ENCODE measurements at regions of chr5 and their contacts with region 1.

Region 1: DNA sequence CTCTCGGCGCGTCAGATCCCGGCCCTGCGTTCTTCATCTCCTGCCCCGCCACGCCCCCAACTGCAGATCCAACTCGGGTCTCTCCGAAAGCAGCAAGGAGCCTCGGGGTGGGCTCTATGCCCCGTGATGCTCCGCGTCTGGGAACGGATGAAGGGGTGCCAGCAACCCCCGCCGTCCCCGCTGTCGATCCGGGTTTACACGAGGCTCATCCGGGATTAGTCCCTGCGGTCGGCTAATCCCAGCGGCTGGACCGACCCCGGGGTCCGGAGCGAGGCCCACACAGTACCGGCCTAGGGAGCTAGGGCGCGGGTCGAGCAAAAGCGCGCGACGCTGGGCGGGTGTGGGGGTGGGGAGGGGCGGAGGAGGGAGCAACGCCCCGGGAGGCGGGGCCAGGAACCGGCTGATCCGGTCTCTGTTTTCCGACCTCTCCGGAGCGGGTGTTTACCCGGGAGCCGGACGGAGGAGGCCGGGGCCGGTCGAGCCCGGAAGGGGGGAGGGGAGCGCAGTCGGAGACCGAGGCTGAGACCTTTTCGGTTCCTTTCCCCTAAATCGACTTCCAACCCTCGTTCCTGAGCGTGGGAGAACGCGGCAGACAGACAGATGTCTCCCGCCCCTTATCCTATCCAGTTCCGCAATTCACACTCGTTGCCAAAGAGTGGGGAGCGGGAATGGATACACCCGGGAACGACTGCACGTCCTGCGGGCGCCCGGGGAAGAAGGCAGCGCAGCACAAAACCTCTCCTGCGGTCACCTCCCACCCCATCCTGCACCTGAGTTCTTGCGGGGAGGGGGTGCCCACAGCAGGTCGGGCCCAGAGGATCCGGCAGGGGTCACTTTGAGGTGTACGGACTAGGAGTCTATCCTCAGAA is 28.6 kb downstream of the PCDH1 start:
- DNase-seq: peak; percentile 90 to 93
- ATAC-seq: peak; percentile 84 to 95 (median 93)
- H3K4me3 ChIP-seq: peak overlapping the region; percentile 48 to 85 (median 68)
- H3K27ac ChIP-seq: peak overlapping the region; percentile 59 to 99 (median 96)
- H3K4me1 ChIP-seq: peaks cover 5 to 54% (median 33%) of the 10 kb centered on the region in 9 donors
- H3K27me3 ChIP-seq: peaks cover 0 to 9% (median 0%) of the 10 kb centered on the region in 7 donors
- CTCF ChIP-seq: peak in 2 of 9 donors; percentile 9 to 22

Region 2: DNA sequence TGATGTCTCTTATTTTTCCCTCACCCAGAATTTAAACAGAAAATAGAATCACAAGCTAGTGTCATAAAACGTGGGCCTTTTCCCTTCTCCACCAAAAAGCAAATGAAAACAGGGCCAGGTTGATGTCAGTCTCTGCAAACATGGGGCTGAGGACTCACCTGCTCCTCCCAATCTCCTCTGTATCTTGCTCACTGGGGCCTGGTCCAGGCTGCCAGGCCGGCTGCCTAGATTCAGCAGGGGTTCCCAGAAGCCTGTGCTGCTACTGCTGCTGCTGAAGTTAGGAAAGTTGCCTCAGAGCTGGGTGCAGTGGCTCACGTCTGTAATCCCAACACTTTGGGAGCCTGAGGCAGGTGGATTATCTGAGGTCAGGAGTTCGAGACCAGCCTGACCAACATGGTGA is 55.7 kb before region 1 on chr5:
- intact Hi-C with region 1: no loop called
- DNase-seq: no peak
- ATAC-seq: no peak
- H3K4me3 ChIP-seq: no peak overlapping the region
- H3K27ac ChIP-seq: no peak overlapping the region
- H3K4me1 ChIP-seq: peaks cover 0 to 6% (median 0%) of the 10 kb centered on the region in 9 donors
- H3K27me3 ChIP-seq: peaks cover 0 to 3% (median 0%) of the 10 kb centered on the region in 7 donors
- CTCF ChIP-seq: no peak

Region 3: DNA sequence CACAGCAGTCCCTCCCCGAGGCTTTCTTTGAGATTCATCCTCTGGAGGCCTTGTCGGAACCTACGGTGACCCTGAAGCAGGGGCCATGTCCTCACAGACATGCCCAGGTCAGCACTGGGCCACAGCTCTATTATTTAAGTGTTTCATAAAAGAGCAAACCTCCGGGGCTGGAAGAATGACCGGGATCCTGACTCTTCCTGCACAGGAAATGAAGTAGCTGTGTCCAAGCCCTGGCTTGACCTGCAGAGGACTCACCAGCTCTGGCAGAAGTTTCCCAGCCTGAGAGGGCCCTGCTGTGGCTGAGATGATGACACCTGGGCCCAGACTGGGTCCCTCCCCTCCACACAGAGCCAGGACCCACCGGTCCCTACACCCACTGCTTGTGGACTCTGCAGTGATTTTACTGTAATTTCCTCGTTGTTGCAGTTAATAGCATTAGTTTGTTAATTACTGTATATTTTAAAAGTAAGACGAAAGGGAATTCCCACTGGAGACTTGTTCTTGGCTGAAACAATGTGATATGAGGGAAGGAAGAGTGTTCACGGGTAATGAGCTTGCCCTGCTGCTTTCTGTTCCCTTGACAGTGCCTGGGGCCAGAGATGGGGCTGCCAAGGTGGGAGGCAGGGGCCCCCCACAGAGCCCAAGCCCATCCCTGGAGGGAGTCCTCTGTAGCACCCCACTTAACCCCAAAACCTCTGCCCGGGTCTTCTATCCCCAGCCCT is 43.6 kb before region 1 on chr5:
- intact Hi-C with region 1: loop called in 4 of 10 experiments (anchors 2 to 5 kb)
- DNase-seq: peak; percentile 29 to 74
- ATAC-seq: peak; percentile 75 to 93 (median 91)
- H3K4me3 ChIP-seq: no peak overlapping the region
- H3K27ac ChIP-seq: peak overlapping the region; percentile 59 to 93 (median 81)
- H3K4me1 ChIP-seq: peaks cover 16 to 67% (median 48%) of the 10 kb centered on the region in 9 donors
- H3K27me3 ChIP-seq: peaks cover 0 to 56% (median 18%) of the 10 kb centered on the region in 7 donors
- CTCF ChIP-seq: peak in 1 of 9 donors; percentile 31